ENCODE measurements at regions of chr13 and their contacts with region 1.

Region 1: GRCh38 chr13:38180670-38181069 is 169.0 kb upstream of the UFM1 start:
- DNase-seq: no peak
- H3K4me3 ChIP-seq: no peak overlapping the region
- H3K27ac ChIP-seq: no peak overlapping the region
- H3K4me1 ChIP-seq: no peaks in the 10 kb centered on the region
- H3K27me3 ChIP-seq: no peaks in the 10 kb centered on the region
- CTCF ChIP-seq: no peak
- EP300 ChIP-seq: no peak
- POLR2A ChIP-seq: no peak

Region 2: DNA sequence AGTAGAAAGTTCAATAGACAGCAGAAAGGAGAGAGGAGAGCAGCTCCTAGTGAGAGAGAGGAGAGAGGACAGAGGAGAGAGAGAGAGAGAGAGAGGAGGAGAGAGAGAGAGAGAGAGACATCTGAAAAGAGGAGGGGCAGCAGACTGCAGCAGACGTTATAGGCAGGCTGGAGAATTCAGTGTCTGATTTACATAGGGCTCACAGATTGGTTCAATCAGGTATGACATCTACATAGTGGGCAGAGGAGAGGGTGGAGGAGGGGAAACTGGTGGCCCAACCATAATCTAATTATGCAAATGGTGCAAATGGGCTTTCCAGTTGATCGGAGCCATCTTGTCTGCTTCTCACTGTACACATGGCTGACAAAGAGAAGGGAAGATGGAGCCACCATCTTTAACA is 89.8 kb before region 1 on chr13:
- in situ Hi-C with region 1: loop called in 1 of 4 experiments (anchors 25 kb)
- intact Hi-C with region 1: no loop called
- DNase-seq: no peak
- H3K4me3 ChIP-seq: no peak overlapping the region
- H3K27ac ChIP-seq: no peak overlapping the region
- H3K4me1 ChIP-seq: no peaks in the 10 kb centered on the region
- H3K27me3 ChIP-seq: no peaks in the 10 kb centered on the region
- CTCF ChIP-seq: no peak
- EP300 ChIP-seq: no peak
- POLR2A ChIP-seq: no peak

Measured in transverse colon (tissue), 4 donors.